Activated CD4-positive, alpha-beta T cell treated with anti-CD3 and anti-CD28 coated beads, Interleukin-2, amount 10 ng/mL, durations not matched to agents 24 days and 14 days (primary cell): ENCODE measurements at regions of chr4 and their contacts with region 1.

Region 1: DNA sequence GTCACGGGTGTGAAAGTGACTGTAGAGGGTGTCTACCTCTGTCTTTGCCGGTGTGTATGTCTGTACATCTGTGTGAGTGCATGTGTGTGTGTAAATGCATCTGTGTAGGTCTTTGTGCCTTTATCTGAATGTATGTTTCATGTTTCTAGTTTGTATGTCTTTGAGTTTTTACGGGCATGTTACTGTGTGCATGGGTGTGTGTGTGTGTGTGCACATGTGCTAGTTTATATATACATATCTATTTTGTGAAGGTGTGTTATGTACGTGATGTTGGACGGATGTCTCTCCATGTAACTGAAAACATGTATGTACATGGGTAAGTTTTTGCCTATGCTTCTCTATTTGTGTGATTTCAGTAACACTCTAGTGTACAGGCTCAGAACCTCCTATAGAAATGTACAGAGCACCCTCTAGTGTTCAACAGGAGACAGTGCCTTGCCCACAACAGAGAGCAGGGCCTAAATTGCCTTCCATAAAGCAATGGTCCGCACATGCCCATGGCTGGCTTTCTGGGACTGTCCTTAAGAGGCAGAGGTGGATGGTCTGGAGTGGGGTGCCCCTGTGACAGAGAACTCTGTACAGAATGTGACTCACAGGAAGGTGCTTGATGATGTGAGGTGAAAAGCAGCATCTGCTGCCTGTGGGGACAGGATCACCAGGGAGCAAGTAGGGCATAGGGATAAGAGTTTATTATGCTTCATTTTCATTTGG is 343.5 kb downstream of the RAPGEF2 start:
- DNase-seq: peak; percentile 75
- H3K4me3 Mint-ChIP-seq: no peak overlapping the region
- H3K27ac Mint-ChIP-seq: no peak overlapping the region
- H3K4me1 Mint-ChIP-seq: no peaks in the 10 kb centered on the region
- H3K27me3 Mint-ChIP-seq: peaks cover 5% of the 10 kb centered on the region

Region 2: GRCh38 chr4:158729716-158730559 is 716.5 kb before region 1 on chr4:
- intact Hi-C with region 1: loop called (anchors 5 kb)
- DNase-seq: peak; percentile 85
- H3K4me3 Mint-ChIP-seq: no peak overlapping the region
- H3K27ac Mint-ChIP-seq: no peak overlapping the region
- H3K4me1 Mint-ChIP-seq: peaks cover 26% of the 10 kb centered on the region
- H3K27me3 Mint-ChIP-seq: peaks cover 13% of the 10 kb centered on the region

Region 3: DNA sequence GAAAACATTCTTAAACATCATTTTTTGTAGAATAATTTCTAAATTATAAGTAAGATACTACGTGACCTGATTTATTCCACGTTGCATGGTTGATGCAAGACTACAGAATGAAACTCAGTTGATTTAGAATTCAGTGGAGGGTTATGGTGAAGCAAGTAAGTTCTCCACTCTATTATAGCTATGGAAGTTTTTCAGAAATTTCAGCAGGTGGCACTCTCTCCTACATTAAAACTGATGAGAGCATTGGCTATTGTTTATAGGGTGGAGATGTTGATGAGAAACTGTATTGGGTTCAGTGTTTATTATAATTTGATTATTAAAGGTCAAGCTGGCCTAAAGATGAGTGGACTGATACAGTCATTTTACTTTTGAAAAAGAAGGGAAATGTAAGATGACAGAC is 589.6 kb before region 1 on chr4:
- intact Hi-C with region 1: loop called (anchors 2 kb)
- DNase-seq: peak; percentile 63
- H3K4me3 Mint-ChIP-seq: no peak overlapping the region
- H3K27ac Mint-ChIP-seq: no peak overlapping the region
- H3K4me1 Mint-ChIP-seq: peaks cover 6% of the 10 kb centered on the region
- H3K27me3 Mint-ChIP-seq: no peaks in the 10 kb centered on the region

Region 4: GRCh38 chr4:159201168-159201567 is 245.3 kb before region 1 on chr4:
- intact Hi-C with region 1: loop called (anchors 5 kb)
- DNase-seq: no peak
- H3K4me3 Mint-ChIP-seq: no peak overlapping the region
- H3K27ac Mint-ChIP-seq: no peak overlapping the region
- H3K4me1 Mint-ChIP-seq: peaks cover 33% of the 10 kb centered on the region
- H3K27me3 Mint-ChIP-seq: no peaks in the 10 kb centered on the region